RWPE1 (cell line): ENCODE measurements at regions of chr5 and their contacts with region 1.

Region 1: DNA sequence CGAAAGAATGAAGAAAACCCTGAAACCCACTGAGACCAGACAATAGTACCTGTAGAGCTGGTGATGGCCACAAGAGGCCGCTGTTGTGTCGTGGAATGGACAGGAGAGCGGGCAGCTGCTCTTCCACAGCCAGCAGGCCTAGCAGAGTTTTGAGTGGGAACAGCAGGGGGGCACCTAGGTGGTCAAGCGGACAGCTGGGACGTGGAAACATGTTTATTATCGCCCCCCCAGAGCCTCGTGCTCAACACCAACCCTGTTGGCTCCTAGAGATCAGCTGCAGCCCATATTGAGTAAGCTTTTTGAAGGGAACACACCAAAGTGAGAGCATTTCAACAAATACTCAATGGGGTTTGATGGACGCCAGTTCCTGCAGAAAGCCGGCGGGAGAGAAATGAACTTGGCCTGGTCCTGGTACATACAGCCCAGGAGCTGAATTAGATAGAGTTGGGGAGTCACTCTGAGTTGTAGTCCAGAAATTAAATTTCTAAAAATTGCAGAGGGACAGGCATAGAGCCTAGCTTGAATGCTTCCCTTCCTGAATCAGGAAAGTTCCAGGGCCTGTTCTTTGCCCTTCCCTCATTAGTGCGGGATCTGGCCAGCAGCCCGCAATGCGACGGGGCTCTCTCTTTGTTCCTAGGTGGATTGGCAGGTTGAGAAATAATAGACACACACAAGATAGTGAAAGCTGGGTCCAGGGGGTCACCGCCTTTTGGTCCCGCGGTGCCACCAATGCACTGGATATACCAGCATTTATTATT is 33.8 kb downstream of the MFAP3 start:
- DNase-seq: peak; percentile 90
- H3K27ac ChIP-seq: no peak overlapping the region
- CTCF ChIP-seq: peak; percentile 95

Region 2: DNA sequence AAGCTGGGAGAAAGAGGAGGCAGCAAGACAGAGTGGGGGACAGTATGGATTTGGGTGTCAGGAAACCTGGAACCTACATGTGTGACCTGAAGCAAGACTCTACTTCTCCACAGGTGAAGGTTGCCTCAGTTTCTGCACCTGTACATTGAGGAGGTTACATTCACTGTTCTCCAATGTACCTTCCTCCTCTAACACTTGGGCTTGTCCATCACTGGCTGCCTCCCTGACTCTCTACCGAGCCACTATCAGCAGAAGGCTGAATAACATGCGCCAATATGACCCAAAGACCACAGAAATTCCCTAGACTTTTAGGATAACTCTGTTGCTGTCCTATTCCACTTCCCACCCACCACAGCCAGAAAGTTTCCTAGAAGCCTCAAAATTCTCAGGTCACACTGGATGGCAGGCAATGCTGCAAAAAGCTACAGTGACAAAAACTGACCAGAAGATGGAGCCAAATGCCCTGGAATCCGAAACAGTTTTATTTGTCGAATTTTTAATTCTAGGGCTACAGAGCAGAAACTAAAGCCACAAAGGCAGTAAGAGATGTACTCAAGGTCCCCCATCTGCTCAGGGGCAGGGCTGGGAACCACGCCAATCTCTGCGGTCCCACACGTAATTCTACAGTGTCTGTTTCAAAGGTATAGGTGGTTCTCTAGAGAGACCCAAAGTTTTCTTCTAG is 98.3 kb before region 1 on chr5:
- CTCF ChIA-PET with region 1: interaction called, 14 read pairs
- POLR2A ChIA-PET with region 1: no interaction called
- DNase-seq: peak; percentile 77
- H3K27ac ChIP-seq: no peak overlapping the region
- CTCF ChIP-seq: peak; percentile 87

Region 3: GRCh38 chr5:154058055-154059038 is 14.2 kb before region 1 on chr5:
- CTCF ChIA-PET with region 1: interaction called, 16 read pairs
- POLR2A ChIA-PET with region 1: no interaction called
- DNase-seq: peak; percentile 36
- H3K27ac ChIP-seq: no peak overlapping the region
- CTCF ChIP-seq: no peak

Region 4: DNA sequence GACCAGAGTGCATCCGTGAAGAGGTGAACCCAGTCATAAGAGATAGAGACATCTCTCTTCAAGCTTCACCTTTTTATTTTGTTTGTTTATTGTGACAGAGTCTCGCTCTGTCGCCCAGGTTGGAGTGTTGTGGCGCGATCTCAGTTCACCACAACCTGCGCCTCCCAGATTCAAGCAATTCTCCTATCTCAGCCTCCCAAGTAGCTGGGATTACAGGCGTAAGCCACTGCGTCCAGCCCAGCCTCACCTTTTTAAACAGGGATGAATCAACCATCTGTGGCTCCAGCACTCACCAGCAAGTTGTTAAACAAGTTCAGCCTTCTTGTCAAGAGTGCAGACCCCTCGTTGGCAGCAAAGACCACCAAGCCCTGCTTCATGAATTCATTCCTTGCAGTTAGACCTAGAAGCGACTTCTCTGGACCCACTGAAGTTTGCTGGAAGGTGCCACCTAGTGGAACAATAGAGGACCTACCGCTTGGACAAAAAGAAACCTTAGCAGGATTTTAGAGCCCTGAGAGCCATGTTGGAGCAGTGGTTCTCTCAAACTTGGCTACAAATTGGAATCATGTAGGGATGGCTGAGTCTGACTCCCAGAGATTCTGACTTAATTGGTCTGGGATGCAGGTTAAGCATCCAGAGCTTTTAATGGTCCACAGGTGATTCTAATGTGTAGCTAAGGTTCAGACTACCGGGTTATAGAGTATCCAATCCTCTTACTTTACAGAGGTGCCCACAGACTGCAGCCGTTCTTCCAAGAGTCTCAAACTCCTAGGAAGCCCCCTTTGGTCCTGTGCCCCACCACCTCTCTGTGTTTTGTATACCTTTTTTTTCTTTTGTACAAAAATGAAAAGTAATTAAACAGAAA is 107.5 kb after region 1 on chr5:
- CTCF ChIA-PET with region 1: interaction called, 29 read pairs
- POLR2A ChIA-PET with region 1: interaction called, 6 read pairs
- DNase-seq: peak; percentile 77
- H3K27ac ChIP-seq: no peak overlapping the region
- CTCF ChIP-seq: peak; percentile 93

Region 5: DNA sequence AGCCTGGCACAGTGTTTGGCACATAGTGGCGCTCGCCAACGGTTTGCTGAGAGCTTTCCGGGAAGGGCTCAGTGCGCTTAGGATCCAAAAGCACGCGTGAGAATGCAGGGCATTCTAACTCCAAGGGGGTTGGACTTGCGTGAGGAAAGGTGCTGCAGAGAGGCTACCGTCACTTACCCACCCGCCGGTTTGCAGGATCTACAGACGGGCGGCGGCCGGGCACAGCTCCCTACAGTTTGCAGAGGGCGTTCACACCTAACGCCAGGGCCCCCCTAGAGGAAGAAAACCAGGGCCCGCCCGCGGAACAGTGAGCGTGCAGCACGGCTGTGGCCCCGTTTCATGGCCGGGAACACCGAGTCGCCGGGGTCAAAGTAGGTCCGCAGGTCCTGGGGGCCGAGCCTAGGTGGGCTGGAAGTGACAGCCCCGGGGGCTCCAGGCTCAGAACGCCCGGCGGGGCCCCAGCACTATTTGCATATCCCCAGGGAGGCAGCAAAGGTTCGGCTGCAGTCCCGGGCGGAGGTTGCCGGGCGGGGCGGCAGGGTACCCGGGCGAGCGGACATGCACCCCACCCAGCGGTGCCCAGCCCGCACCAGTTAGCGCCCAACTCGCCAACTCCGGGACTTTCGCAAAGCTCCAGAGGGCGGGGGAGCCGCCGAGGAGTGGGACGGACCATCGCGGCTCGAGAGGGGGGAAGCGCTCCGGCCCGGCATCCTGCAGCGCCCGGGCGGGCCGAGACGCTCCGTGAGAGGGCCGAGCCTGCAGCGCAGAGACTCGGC is 117.4 kb after region 1 on chr5:
- CTCF ChIA-PET with region 1: interaction called, 13 read pairs
- POLR2A ChIA-PET with region 1: no interaction called
- DNase-seq: peak; percentile 97
- H3K27ac ChIP-seq: peak overlapping the region; percentile 82
- CTCF ChIP-seq: peak; percentile 64

Region 6: GRCh38 chr5:154405078-154405792 is 332.6 kb after region 1 on chr5:
- CTCF ChIA-PET with region 1: interaction called, 33 read pairs
- POLR2A ChIA-PET with region 1: no interaction called
- DNase-seq: peak; percentile 95
- H3K27ac ChIP-seq: peak overlapping the region; percentile 43
- CTCF ChIP-seq: peak; percentile 94